IMR-90 (cell line): ENCODE measurements at regions of chr10 and their contacts with region 1.

Region 1: GRCh38 chr10:49592726-49593563 is 17.2 kb upstream of the SLC18A3 start:
- DNase-seq: peak; percentile 43
- ATAC-seq: peak; percentile 84
- H3K4me3 ChIP-seq: no peak overlapping the region
- H3K27ac ChIP-seq: no peak overlapping the region
- H3K4me1 ChIP-seq: no peaks in the 10 kb centered on the region
- H3K27me3 ChIP-seq: peaks cover 11% of the 10 kb centered on the region
- CTCF ChIP-seq: peak; percentile 77
- POLR2A ChIP-seq: no peak
- RAD21 ChIP-seq: peak; percentile 51

Region 2: DNA sequence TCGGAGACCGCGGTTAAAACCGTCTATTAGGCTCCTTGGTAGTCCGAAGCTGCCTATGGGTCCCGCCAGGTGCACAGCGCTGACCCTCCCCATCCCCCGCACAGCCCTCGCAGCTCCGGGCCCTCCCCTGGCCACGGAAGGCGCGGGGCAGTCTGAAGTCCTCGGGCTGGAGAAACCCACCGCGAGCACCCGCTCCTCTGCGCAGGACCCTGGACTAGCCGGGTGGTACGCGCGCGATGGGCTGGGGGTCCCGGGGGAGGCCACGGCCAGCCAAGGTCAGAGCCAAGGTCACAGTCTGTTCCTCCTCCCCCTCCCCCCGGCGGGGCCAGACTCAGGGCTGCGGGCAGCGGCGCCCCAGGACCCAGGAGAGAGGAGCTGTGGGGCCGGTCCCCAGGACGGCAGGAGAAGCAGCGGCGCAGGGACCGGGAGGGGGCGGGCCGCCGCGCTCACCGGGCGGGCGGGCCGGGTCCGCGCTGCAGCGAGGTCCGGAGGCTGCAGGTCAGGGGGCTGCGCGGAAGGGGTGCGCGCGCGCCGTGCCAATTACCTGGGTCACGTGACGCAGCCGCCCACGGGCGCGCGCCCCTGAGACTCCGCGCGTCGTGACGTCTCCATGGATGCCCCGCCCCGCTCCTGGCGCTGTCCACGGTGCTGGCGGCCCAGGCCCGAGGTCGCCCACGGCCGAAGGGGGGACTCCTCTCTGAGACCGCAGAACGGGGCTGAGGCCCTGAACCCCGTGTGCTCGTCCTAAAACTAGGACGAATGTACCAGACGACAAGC is 169.0 kb after region 1 on chr10 and contains the start of gene OGDHL:
- CTCF ChIA-PET with region 1: no interaction called
- POLR2A ChIA-PET with region 1: no interaction called
- dilution Hi-C with region 1: no loop called
- in situ Hi-C with region 1: no loop called
- intact Hi-C with region 1: loop called (anchors 5 kb)
- DNase-seq: peak; percentile 19
- ATAC-seq: peak; percentile 99
- H3K4me3 ChIP-seq: peak within 1 kb of the TSS; percentile 42
- H3K27ac ChIP-seq: no peak within 1 kb of the TSS
- H3K4me1 ChIP-seq: no peaks in the 10 kb centered on the region
- H3K27me3 ChIP-seq: peaks cover 11% of the 10 kb centered on the region
- CTCF ChIP-seq: no peak
- POLR2A ChIP-seq: no peak
- RAD21 ChIP-seq: no peak
- total RNA-seq, gene OGDHL: under 0.01 and 0.18 TPM in 2 replicates

Region 3: GRCh38 chr10:49831352-49832040 is 238.6 kb after region 1 on chr10:
- CTCF ChIA-PET with region 1: no interaction called
- POLR2A ChIA-PET with region 1: no interaction called
- dilution Hi-C with region 1: no loop called
- in situ Hi-C with region 1: no loop called
- intact Hi-C with region 1: no loop called
- DNase-seq: peak; percentile 34
- ATAC-seq: no peak; the same call in 1 of the 2 replicates
- H3K4me3 ChIP-seq: no peak overlapping the region
- H3K27ac ChIP-seq: no peak overlapping the region
- H3K4me1 ChIP-seq: 0 out of 2 replicates have a peak, but pooled peaks cover 2% of the 10 kb centered on the region
- H3K27me3 ChIP-seq: no peaks in the 10 kb centered on the region
- CTCF ChIP-seq: no peak
- POLR2A ChIP-seq: no peak
- RAD21 ChIP-seq: no peak

Region 4: DNA sequence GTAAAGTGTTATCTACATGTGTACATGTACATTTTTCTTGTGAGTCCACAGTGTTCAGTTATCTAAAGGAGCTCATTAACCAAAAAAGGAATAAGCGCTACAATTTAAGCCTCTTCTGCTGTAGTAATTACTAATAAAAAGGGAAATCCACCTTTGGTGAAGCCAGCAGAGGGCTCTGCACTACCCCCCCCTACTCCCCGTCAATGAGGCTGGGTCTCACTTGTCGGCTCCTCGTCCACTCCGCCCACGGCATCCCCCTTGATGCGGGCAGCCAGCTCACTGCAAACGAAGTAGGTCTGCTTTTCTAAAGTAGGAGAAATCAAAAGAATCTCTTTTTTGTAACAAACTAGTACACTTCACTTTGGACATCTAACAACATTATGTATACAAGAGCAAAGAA is 470.2 kb after region 1 on chr10:
- CTCF ChIA-PET with region 1: no interaction called
- POLR2A ChIA-PET with region 1: no interaction called
- dilution Hi-C with region 1: no loop called
- in situ Hi-C with region 1: no loop called
- intact Hi-C with region 1: loop called (anchors 10 kb)
- DNase-seq: no peak
- ATAC-seq: no peak
- H3K4me3 ChIP-seq: no peak overlapping the region
- H3K27ac ChIP-seq: no peak overlapping the region
- H3K4me1 ChIP-seq: no peaks in the 10 kb centered on the region
- H3K27me3 ChIP-seq: no peaks in the 10 kb centered on the region; the same call in 1 of the 2 replicates
- CTCF ChIP-seq: 0 out of 2 replicates have a peak, but pooled peaks have one; percentile 7
- POLR2A ChIP-seq: no peak
- RAD21 ChIP-seq: no peak

Region 5: GRCh38 chr10:50216894-50217293 is 623.9 kb after region 1 on chr10:
- CTCF ChIA-PET with region 1: no interaction called
- POLR2A ChIA-PET with region 1: no interaction called
- dilution Hi-C with region 1: no loop called
- in situ Hi-C with region 1: loop called (anchors 10 kb)
- intact Hi-C with region 1: loop called (anchors 1 kb)
- DNase-seq: peak; percentile 10
- ATAC-seq: no peak
- H3K4me3 ChIP-seq: no peak overlapping the region
- H3K27ac ChIP-seq: no peak overlapping the region
- H3K4me1 ChIP-seq: no peaks in the 10 kb centered on the region
- H3K27me3 ChIP-seq: peaks cover 3% of the 10 kb centered on the region; the same call in 1 of the 2 replicates
- CTCF ChIP-seq: no peak
- POLR2A ChIP-seq: no peak
- RAD21 ChIP-seq: no peak

Region 6: DNA sequence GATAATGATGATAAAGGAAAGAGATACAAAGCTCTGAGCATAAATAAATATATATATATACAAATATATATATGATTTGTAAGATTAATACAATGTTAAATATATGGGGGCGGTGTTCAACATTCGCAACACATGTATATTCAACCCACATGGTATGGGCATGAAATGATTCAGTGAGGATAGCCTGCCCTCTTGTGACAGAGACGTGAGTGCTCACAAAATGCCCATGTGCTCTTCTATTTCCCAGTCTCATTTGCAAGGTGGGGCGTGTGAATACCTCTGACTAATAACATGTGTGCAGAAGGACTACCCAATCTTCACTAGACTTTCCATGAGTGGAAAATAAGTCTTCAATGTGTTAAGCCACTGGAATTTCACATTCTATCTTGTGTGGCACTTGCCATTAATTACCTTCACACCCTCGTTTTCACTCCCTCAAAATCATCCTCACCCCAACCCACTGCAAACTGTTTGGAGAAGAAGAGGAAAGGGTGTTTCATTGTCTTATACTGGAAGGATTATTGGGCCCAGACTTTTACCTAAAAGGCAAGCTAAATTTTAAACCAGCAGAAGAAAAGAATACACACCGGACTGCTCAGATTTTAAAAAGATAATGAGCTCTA is 631.5 kb after region 1 on chr10:
- CTCF ChIA-PET with region 1: interaction called, 4 read pairs
- POLR2A ChIA-PET with region 1: no interaction called
- dilution Hi-C with region 1: no loop called
- in situ Hi-C with region 1: loop called (anchors 10 kb)
- intact Hi-C with region 1: loop called (anchors 1 kb)
- DNase-seq: peak; percentile 74
- ATAC-seq: peak; percentile 88
- H3K4me3 ChIP-seq: no peak overlapping the region
- H3K27ac ChIP-seq: no peak overlapping the region
- H3K4me1 ChIP-seq: no peaks in the 10 kb centered on the region
- H3K27me3 ChIP-seq: peaks cover 14% of the 10 kb centered on the region
- CTCF ChIP-seq: peak; percentile 73
- POLR2A ChIP-seq: no peak
- RAD21 ChIP-seq: peak; percentile 85